Activated CD8-positive, alpha-beta T cell treated with anti-CD3 and anti-CD28 coated beads for 36 hours (primary cell): ENCODE measurements at regions of chrX and their contacts with region 1.

Region 1: GRCh38 chrX:74133156-74133796 is 170.7 kb upstream of the ZCCHC13 start:
- DNase-seq: no peak
- ATAC-seq: no peak
- H3K4me3 Mint-ChIP-seq: no peak overlapping the region
- H3K27ac Mint-ChIP-seq: no peak overlapping the region
- H3K4me1 Mint-ChIP-seq: no peaks in the 10 kb centered on the region
- H3K27me3 Mint-ChIP-seq: no peaks in the 10 kb centered on the region
- CTCF ChIP-seq: peak; percentile 65

Region 2: DNA sequence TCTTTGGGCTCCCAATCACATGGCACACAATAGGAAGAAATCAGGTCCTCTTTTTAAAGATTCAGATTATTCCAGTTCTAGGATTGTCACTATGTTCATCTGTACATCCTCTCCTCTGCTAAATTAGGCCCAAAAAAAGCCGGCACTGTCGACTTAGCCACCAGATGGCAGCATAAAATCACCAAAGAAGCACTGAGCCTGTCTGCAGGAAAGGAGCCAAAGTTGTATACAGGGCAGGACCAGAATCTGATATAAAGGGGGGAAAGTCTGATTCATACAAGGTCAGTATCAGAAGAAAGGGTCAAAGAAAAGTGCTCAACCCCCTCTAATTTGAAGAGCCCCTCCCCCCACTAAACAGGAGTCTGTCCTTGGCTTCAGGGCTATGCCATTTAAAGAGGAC is 277.7 kb before region 1 on chrX:
- CTCF ChIA-PET with region 1: interaction called, 5 read pairs
- POLR2A ChIA-PET with region 1: no interaction called
- intact Hi-C with region 1: loop called (anchors 2 kb)
- DNase-seq: peak; percentile 67
- ATAC-seq: peak; percentile 45
- H3K4me3 Mint-ChIP-seq: no peak overlapping the region
- H3K27ac Mint-ChIP-seq: no peak overlapping the region
- H3K4me1 Mint-ChIP-seq: no peaks in the 10 kb centered on the region
- H3K27me3 Mint-ChIP-seq: no peaks in the 10 kb centered on the region
- CTCF ChIP-seq: no peak

Region 3: GRCh38 chrX:74015379-74016019 is 117.8 kb before region 1 on chrX:
- CTCF ChIA-PET with region 1: interaction called, 4 read pairs
- POLR2A ChIA-PET with region 1: no interaction called
- intact Hi-C with region 1: loop called (anchors 10 kb)
- DNase-seq: peak; percentile 73
- ATAC-seq: peak; percentile 77
- H3K4me3 Mint-ChIP-seq: no peak overlapping the region
- H3K27ac Mint-ChIP-seq: no peak overlapping the region
- H3K4me1 Mint-ChIP-seq: no peaks in the 10 kb centered on the region
- H3K27me3 Mint-ChIP-seq: no peaks in the 10 kb centered on the region
- CTCF ChIP-seq: peak; percentile 51